ENCODE measurements at regions of chr1 and their contacts with region 1.

Region 1: GRCh38 chr1:180482425-180483275 is 19.7 kb downstream of the ACBD6 start:
- DNase-seq: no peak
- ATAC-seq: peak; percentile 55
- H3K4me3 ChIP-seq: no peak overlapping the region
- H3K27ac ChIP-seq: no peak overlapping the region
- H3K4me1 ChIP-seq: 0 out of 4 replicates have a peak, but pooled peaks cover 0 to 4% of the 10 kb centered on the region in 2 experiments
- H3K27me3 ChIP-seq: no peaks in the 10 kb centered on the region
- CTCF ChIP-seq: peak; percentile 41 to 76 (median 65); a peak in 5 of 6 replicates
- POLR2A ChIP-seq: no peak
- RAD21 ChIP-seq: peak; percentile 45

Region 2: GRCh38 chr1:180252638-180253536 is 229.8 kb before region 1 on chr1:
- CTCF ChIA-PET with region 1: interaction called, 4 read pairs
- POLR2A ChIA-PET with region 1: no interaction called
- RAD21 ChIA-PET with region 1: no interaction called
- intact Hi-C with region 1: loop called (anchors 1 kb)
- DNase-seq: peak; percentile 51
- ATAC-seq: peak; percentile 86
- H3K4me3 ChIP-seq: no peak overlapping the region
- H3K27ac ChIP-seq: no peak overlapping the region
- H3K4me1 ChIP-seq: peaks cover 0 to 4% of the 10 kb centered on the region in 2 experiments; a peak in 1 of 4 replicates
- H3K27me3 ChIP-seq: no peaks in the 10 kb centered on the region
- CTCF ChIP-seq: peak; percentile 88 to 92 (median 92); a peak in 5 of 6 replicates
- POLR2A ChIP-seq: no peak
- RAD21 ChIP-seq: peak; percentile 92

Region 3: DNA sequence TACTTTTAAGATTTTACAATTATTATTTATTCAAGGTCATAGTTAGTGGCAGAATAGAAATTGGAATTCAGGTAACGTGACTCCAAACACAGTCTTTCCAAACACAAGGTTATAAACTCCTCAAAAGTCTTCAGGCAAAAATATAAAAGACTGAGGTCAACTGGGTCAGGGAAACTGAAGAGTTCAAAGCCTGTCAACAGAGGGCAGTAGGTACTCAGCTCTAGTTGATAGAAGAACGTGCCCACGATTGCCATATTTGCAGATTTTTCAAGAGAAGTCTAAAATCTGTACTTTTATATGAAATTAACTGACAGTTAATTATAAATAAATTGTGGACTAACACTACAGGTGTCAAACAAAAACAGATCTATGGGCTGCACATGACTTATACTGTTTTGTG is 117.6 kb before region 1 on chr1:
- CTCF ChIA-PET with region 1: no interaction called
- POLR2A ChIA-PET with region 1: no interaction called
- RAD21 ChIA-PET with region 1: no interaction called
- intact Hi-C with region 1: loop called (anchors 5 kb)
- DNase-seq: no peak
- ATAC-seq: peak; percentile 54; the same call in 1 of the 2 replicates
- H3K4me3 ChIP-seq: no peak overlapping the region
- H3K27ac ChIP-seq: no peak overlapping the region
- H3K4me1 ChIP-seq: peaks cover 0 to 4% of the 10 kb centered on the region in 2 experiments; a peak in 1 of 4 replicates
- H3K27me3 ChIP-seq: no peaks in the 10 kb centered on the region
- CTCF ChIP-seq: peak in 2 of 3 experiments; percentile 46 to 51; a peak in 4 of 6 replicates
- POLR2A ChIP-seq: no peak
- RAD21 ChIP-seq: peak; percentile 37; the same call in 1 of the 2 replicates

Region 4: DNA sequence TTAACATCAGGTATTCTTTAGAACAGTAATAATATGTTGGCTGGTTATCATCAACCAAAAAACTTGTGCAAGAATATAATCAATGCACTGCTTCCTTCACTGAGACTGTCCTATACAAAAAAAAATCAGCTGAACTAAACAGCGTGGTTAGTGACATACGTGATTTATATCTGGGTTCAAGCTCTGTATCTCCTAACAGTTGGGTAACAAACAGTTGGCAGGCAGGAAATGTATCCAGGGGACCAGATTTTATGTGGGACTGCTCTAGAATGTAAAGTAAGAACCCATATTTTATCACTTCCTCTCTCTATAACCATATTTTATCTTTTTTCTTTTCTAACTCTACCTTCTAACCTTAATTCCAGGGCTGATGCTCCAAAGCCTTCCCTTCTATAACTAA is 11.7 kb after region 1 on chr1:
- CTCF ChIA-PET with region 1: no interaction called
- POLR2A ChIA-PET with region 1: no interaction called
- RAD21 ChIA-PET with region 1: no interaction called
- intact Hi-C with region 1: no loop called
- DNase-seq: no peak
- ATAC-seq: no peak
- H3K4me3 ChIP-seq: no peak overlapping the region
- H3K27ac ChIP-seq: no peak overlapping the region
- H3K4me1 ChIP-seq: no peaks in the 10 kb centered on the region
- H3K27me3 ChIP-seq: no peaks in the 10 kb centered on the region
- CTCF ChIP-seq: no peak
- POLR2A ChIP-seq: no peak
- RAD21 ChIP-seq: no peak